ENCODE measurements at regions of chr11 and their contacts with region 1.

Region 1: DNA sequence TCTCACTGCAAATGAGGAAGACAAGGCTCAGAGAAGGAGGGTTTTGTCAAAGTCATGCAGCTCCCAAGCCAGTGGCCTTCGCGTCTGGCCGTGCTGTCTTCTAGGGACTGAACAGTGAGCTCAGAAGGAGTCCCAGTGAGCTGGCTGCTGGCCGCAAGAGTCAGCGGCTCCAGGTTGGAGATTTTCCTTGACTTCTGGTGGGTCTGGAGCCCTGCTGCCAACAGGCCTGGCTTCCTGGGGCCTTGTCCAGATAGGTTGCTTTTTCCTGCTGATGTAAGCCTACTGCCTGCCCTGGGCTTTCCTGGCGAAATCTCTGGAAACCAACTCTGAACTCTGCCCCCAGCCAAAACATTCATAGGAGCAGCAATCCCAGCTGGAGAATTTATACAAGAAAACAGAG is 272.7 kb upstream of the CADM1 start:
- DNase-seq: no peak
- ATAC-seq: no peak
- H3K4me3 ChIP-seq: no peak overlapping the region
- H3K4me3 Mint-ChIP-seq: no peak overlapping the region
- H3K27ac ChIP-seq: no peak overlapping the region
- H3K27ac Mint-ChIP-seq: no peak overlapping the region
- H3K4me1 ChIP-seq: no peaks in the 10 kb centered on the region
- H3K4me1 Mint-ChIP-seq: no peaks in the 10 kb centered on the region
- H3K27me3 ChIP-seq: no peaks in the 10 kb centered on the region
- H3K27me3 Mint-ChIP-seq: no peaks in the 10 kb centered on the region

Region 2: DNA sequence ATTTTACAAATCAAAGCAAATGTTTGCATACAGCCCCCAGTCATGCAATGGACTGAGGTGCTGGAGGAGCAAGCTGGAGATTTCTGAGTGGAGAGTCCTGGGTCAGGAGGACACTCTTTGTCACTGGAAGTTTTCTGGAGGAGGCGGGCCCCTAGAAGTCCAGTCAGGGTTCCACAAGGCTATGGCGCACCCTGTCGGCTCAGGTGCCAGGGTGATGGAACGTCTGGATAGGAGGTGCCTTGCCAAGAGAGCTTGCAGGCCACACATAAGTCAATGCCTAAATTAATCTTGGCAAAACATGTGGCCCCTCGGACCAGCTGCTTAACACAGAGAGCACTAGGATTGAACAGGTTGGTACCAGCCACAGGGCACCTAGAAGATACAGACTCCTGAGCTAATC is 98.0 kb before region 1 on chr11:
- CTCF ChIA-PET with region 1: no interaction called
- POLR2A ChIA-PET with region 1: no interaction called
- intact Hi-C with region 1: no loop called
- DNase-seq: no peak
- ATAC-seq: no peak
- H3K4me3 ChIP-seq: no peak overlapping the region
- H3K4me3 Mint-ChIP-seq: no peak overlapping the region
- H3K27ac ChIP-seq: no peak overlapping the region
- H3K27ac Mint-ChIP-seq: no peak overlapping the region
- H3K4me1 ChIP-seq: no peaks in the 10 kb centered on the region
- H3K4me1 Mint-ChIP-seq: no peaks in the 10 kb centered on the region
- H3K27me3 ChIP-seq: no peaks in the 10 kb centered on the region
- H3K27me3 Mint-ChIP-seq: peaks cover 0 to 15% (median 6%) of the 10 kb centered on the region in 5 donors

Region 3: GRCh38 chr11:115792903-115793302 is 16.0 kb after region 1 on chr11:
- CTCF ChIA-PET with region 1: no interaction called
- POLR2A ChIA-PET with region 1: no interaction called
- intact Hi-C with region 1: no loop called
- DNase-seq: no peak
- ATAC-seq: no peak
- H3K4me3 ChIP-seq: no peak overlapping the region
- H3K4me3 Mint-ChIP-seq: no peak overlapping the region
- H3K27ac ChIP-seq: no peak overlapping the region
- H3K27ac Mint-ChIP-seq: no peak overlapping the region
- H3K4me1 ChIP-seq: no peaks in the 10 kb centered on the region
- H3K4me1 Mint-ChIP-seq: no peaks in the 10 kb centered on the region
- H3K27me3 ChIP-seq: no peaks in the 10 kb centered on the region
- H3K27me3 Mint-ChIP-seq: peaks cover 0 to 10% (median 0%) of the 10 kb centered on the region in 5 donors

Region 4: GRCh38 chr11:115820026-115820425 is 43.1 kb after region 1 on chr11:
- CTCF ChIA-PET with region 1: no interaction called
- POLR2A ChIA-PET with region 1: no interaction called
- intact Hi-C with region 1: loop called in 1 of 2 experiments (anchors 2 kb)
- DNase-seq: no peak
- ATAC-seq: no peak
- H3K4me3 ChIP-seq: no peak overlapping the region
- H3K4me3 Mint-ChIP-seq: no peak overlapping the region
- H3K27ac ChIP-seq: no peak overlapping the region
- H3K27ac Mint-ChIP-seq: no peak overlapping the region
- H3K4me1 ChIP-seq: no peaks in the 10 kb centered on the region
- H3K4me1 Mint-ChIP-seq: no peaks in the 10 kb centered on the region
- H3K27me3 ChIP-seq: no peaks in the 10 kb centered on the region
- H3K27me3 Mint-ChIP-seq: peaks cover 0 to 7% (median 0%) of the 10 kb centered on the region in 5 donors